PC-9 (cell line): ENCODE measurements at regions of chr12 and their contacts with region 1.

Region 1: DNA sequence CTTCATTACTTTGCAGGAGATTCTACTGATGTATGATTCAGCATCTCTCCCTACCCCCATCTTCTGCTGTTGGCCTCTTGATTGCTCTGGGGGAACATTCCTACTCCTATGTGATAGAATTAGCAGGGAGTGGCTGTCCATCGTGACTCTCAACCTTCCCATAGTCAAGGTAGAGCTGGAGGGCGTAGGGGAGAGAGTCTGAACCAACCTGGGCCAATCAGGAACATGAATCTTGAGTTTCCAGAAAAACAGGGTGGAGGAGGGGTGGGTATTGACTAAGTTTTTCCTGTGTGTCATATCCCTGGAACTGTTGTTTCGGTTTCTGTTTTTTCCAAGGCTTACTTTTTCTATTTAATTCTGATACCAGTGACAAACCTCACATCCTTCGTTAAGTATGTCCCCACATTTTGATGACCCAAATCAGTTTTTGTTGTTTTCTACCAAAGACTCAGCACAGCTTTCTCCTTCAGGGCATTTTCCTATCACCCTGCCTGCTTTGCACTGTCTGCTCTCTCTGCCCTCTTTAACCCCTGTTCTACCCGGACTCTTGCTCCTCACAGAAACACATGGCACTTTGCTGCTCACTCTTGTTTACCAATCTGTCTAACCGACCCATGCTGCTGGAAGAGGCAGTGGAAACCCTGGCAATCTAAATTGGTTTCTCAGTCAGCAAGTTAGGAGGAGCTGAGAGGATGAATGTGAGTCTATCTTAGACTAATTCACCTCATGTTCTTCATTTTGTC is 1428.3 kb downstream of the AACS start:
- DNase-seq: peak; percentile 78 to 82
- H3K4me3 ChIP-seq: peak overlapping the region; percentile 31; the same call in 1 of the 2 replicates
- H3K27ac ChIP-seq: peak overlapping the region; percentile 95
- H3K4me1 ChIP-seq: peaks cover 15% of the 10 kb centered on the region
- H3K27me3 ChIP-seq: no peaks in the 10 kb centered on the region
- CTCF ChIP-seq: no peak

Region 2: GRCh38 chr12:126051611-126052107 is 441.9 kb before region 1 on chr12:
- CTCF ChIA-PET with region 1: no interaction called
- POLR2A ChIA-PET with region 1: no interaction called
- intact Hi-C with region 1: loop called (anchors 10 kb)
- DNase-seq: peak; percentile 52 to 91
- H3K4me3 ChIP-seq: no peak overlapping the region
- H3K27ac ChIP-seq: peak overlapping the region; percentile 93
- H3K4me1 ChIP-seq: peaks cover 38% of the 10 kb centered on the region
- H3K27me3 ChIP-seq: no peaks in the 10 kb centered on the region
- CTCF ChIP-seq: peak; percentile 54; the same call in 1 of the 2 replicates

Region 3: DNA sequence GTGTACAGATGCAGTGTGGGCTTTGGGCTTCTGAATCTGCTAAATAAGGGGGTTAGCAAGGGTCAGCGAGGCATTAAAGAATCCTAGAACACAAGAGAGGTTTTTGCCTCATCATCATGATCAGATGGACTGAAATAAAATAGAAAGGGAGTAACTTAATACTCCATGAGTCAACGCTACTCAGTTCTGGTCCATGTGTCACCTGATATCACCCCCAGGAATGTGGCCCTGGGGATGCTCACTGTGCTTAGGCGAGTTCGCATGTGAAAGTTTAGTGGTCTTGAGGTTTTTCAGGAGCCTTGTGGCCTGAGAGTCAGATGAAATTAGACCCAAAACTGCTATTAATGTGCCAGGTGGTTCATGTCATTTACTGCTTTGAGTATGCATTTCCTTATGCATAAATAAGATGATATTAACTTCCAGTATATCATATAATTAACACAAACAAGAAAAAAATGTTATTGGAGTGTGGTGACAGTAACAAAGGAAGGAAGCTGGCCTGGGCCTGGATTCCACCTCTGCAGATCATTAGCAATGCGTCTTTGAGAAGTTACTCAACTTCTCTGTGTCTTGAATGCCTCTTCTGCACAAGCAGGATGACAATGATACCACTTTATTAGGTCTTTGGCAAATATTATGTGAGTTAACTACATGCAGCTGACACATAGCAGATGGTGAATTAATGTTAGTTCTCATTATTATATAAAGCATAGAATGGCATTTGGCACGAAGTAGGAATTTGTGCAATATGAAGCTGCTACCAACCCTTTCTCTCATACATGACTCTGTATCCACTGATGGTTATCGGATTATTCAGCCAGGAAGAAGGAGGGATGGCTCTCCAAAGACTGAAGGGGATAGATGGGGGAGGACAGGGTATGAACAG is 155.7 kb before region 1 on chr12:
- CTCF ChIA-PET with region 1: no interaction called
- POLR2A ChIA-PET with region 1: no interaction called
- intact Hi-C with region 1: loop called (anchors 1 kb)
- DNase-seq: peak; percentile 71 to 74
- H3K4me3 ChIP-seq: no peak overlapping the region
- H3K27ac ChIP-seq: peak overlapping the region; percentile 93
- H3K4me1 ChIP-seq: peaks cover 32% of the 10 kb centered on the region
- H3K27me3 ChIP-seq: no peaks in the 10 kb centered on the region
- CTCF ChIP-seq: no peak

Region 4: DNA sequence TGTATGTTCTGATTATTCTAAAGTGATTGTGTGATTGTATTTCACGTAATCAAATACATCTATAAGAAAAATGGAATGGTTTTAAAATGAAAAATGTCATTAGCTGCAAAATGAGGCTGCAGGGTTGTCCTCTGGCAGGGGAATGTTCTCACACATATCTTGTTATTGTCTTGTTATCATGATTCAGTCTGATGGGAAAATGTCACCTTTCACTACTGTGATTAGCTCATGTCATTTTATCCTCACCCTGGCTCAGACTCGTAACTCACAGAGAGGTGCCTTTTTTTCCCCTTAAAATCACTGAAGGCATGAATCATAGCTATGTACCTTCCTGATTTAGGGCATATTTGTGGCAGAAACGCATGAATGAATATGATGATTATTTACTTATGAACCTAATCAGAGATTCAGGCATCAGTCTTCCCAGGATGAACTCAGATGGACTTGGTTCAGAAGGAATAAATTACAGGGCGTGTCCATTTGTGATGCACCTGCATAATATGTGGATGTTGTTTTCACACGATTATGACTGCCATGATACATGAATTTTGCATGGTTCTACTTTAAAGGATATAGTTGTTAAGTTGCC is 89.2 kb before region 1 on chr12:
- CTCF ChIA-PET with region 1: no interaction called
- POLR2A ChIA-PET with region 1: no interaction called
- intact Hi-C with region 1: loop called (anchors 1 kb)
- DNase-seq: peak; percentile 16 to 80
- H3K4me3 ChIP-seq: no peak overlapping the region
- H3K27ac ChIP-seq: peak overlapping the region; percentile 95
- H3K4me1 ChIP-seq: peaks cover 28% of the 10 kb centered on the region
- H3K27me3 ChIP-seq: no peaks in the 10 kb centered on the region
- CTCF ChIP-seq: no peak

Region 5: DNA sequence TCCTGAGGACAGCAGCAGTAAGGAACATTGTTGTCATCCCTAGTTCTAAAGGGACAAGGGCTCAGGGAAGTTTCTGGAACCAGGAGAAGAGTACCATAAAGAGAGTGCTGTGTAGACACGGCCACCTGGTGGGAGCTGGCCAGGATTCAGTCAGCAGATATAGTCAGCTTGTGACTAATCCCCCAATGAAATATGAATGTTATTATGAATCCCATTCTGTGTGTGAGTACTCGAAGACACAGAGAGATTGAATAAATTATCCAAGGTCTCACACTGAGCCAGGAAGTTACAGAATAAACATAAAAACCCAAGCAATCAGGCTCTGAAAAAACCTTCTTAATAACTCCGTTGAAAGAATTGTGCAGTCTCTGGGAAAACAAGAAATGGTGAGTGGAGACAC is 68.8 kb before region 1 on chr12:
- CTCF ChIA-PET with region 1: no interaction called
- POLR2A ChIA-PET with region 1: interaction called, 30 read pairs
- intact Hi-C with region 1: no loop called
- DNase-seq: no peak
- H3K4me3 ChIP-seq: no peak overlapping the region
- H3K27ac ChIP-seq: no peak overlapping the region
- H3K4me1 ChIP-seq: no peaks in the 10 kb centered on the region
- H3K27me3 ChIP-seq: no peaks in the 10 kb centered on the region
- CTCF ChIP-seq: no peak

Region 6: GRCh38 chr12:126582231-126582630 is 88.7 kb after region 1 on chr12:
- CTCF ChIA-PET with region 1: no interaction called
- POLR2A ChIA-PET with region 1: no interaction called
- intact Hi-C with region 1: loop called (anchors 2 kb)
- DNase-seq: peak; percentile 45 to 48
- H3K4me3 ChIP-seq: no peak overlapping the region
- H3K27ac ChIP-seq: no peak overlapping the region
- H3K4me1 ChIP-seq: 0 out of 2 replicates have a peak, but pooled peaks cover 4% of the 10 kb centered on the region
- H3K27me3 ChIP-seq: no peaks in the 10 kb centered on the region
- CTCF ChIP-seq: no peak